ENCODE measurements at regions of chr9 and their contacts with region 1.

Region 1: DNA sequence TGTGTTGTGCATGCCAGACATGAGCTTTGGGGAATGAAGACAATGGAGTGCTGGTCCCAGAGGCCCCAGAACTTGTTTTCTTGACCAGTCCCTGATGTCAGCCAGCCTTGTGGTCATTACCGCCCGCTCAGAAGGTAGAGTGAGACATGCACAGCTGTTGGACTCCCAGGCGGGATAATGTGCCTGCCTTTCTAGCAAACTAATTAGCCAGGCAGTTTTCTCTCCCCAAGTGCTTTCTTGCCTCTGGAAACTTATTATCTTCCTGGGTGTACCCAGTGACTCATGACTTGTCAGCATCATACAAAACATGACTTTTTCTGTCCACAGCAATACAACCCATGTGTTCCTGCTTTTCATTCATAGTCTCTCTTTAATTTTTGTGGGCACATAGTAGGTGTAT is 131.1 kb downstream of the RMI1 start:
- DNase-seq: no peak
- H3K4me3 ChIP-seq: no peak overlapping the region
- H3K27ac ChIP-seq: no peak overlapping the region
- H3K4me1 ChIP-seq: no peaks in the 10 kb centered on the region
- CTCF ChIP-seq: no peak

Region 2: DNA sequence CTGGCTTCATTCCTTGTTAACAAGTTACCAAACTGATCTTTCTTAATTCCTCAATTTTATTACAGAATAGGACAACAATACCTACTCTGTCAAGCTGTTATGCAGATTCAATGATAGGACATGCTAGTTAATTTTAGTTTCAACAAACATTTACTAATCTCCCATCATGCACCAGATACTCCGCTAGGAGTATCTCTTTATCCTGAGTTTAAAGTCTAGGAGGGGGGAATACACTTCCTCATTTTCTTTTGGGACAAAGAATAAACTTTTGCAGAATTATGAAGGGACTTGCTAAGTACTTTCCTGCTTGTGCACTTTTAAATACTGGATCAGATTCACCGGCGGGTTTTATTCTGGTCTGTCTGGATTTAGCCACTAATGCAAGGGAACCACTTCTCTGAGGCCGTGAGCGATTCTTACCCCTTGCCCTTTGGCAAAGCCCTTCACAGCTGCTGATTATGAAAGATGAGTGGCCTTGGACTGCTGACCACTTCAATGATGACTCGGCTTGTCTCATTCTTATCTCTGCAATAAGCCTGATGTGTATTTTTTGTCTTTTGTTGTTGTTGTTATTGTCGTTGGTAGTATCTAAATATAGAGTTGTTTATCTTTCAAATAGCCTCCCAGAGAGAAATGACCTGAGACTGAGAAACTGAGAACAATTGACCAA is 57.2 kb before region 1 on chr9:
- CTCF ChIA-PET with region 1: no interaction called
- POLR2A ChIA-PET with region 1: no interaction called
- intact Hi-C with region 1: loop called (anchors 10 kb)
- DNase-seq: no peak
- H3K4me3 ChIP-seq: no peak overlapping the region
- H3K27ac ChIP-seq: no peak overlapping the region
- H3K4me1 ChIP-seq: no peaks in the 10 kb centered on the region
- CTCF ChIP-seq: no peak

Region 3: DNA sequence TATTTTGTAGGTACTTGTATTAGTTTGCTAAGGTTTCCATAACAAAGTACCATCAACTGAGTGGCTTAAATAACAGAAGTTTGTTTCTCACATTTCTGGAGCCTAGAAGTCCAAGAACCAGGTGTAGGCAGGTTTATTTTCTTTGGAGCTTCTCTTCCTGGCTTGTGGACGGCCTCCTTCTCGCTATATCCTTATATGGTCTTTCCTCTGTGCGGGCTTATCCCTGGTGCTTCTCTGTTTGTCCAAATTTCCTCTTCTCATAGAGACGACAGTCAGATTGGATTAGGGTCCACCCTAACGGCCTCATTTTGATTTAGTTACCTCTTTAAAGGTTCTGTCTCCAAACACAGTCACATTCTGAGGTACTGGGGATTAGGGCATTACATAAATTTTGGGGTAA is 42.9 kb before region 1 on chr9:
- CTCF ChIA-PET with region 1: no interaction called
- POLR2A ChIA-PET with region 1: no interaction called
- intact Hi-C with region 1: no loop called
- DNase-seq: no peak
- H3K4me3 ChIP-seq: no peak overlapping the region
- H3K27ac ChIP-seq: no peak overlapping the region
- H3K4me1 ChIP-seq: no peaks in the 10 kb centered on the region
- CTCF ChIP-seq: no peak

Region 4: DNA sequence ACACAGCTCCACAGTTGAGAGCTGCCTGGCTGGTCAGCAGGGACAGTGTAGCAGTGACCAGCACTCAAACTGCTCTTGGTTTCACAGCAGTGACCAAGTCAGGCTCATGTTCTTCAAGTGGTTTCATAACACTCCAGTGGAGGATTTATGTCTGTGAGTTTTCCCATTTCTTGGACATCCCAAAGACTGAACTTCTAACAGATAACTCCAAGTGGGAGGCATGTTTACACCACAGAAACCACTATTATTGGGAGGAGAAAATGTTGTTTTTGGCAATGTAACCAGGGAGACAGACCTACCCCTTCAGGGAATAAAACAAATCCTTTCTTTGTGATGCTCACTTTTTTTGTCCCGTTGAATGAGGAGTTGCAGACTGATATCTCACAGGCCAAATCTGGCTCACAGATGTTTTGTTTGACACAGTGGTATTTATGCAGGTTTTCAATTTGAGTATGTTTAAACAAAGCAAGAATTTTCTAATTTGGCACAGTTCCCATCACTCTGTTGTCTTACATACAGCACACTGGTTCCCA is 10.3 kb after region 1 on chr9:
- CTCF ChIA-PET with region 1: no interaction called
- POLR2A ChIA-PET with region 1: no interaction called
- intact Hi-C with region 1: no loop called
- DNase-seq: no peak
- H3K4me3 ChIP-seq: no peak overlapping the region
- H3K27ac ChIP-seq: no peak overlapping the region
- H3K4me1 ChIP-seq: no peaks in the 10 kb centered on the region
- CTCF ChIP-seq: no peak